Esophagus muscularis mucosa (tissue), 4 donors: ENCODE measurements at regions of chr1 and their contacts with region 1.

Region 1: DNA sequence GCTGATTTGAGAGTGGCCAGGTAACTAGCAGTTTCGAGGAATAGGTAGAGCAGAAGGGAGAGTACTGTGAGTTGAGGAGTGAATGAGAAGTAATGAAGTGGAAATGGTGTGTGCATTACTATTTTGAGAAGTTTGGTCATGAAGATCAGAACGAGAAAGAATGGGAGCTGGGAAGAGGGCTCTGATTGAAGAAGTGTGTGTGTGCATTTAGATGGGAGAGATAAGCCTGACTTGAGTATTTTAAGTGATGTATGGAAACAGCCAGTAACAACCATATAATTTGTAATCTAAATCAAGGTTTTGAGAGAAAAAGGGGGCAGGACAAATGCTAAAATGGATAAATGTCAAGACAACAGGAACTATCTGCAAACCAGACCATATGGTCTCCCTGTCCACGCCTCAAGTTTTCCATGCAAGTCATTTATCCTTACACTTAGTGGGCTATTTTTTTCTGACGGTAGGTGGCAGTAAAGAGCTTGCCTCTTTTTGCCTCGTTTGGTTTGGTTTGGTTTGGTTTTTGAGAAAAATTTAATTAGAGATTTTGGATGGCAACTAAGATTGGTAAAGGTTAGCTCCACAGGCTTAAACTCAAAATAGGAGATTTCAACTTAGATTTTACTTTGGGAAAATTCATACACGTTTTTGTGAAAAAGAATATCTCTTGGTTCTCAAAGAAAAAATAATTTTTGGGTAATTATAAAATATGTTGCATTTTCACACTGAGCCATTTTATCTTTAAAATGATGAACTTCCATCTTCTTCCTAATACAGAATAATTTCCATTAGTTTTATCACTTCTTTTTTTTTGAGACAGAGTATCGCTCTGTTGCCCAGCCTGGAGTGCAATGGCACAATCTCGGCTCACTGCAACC is 9.5 kb upstream of the B3GALNT2 start:
- DNase-seq: no peak
- H3K4me3 ChIP-seq: no peak overlapping the region
- H3K27ac ChIP-seq: no peak overlapping the region
- H3K4me1 ChIP-seq: no peaks in the 10 kb centered on the region
- H3K27me3 ChIP-seq: no peaks in the 10 kb centered on the region
- CTCF ChIP-seq: peak; percentile 74 to 97 (median 84)
- EP300 ChIP-seq: no peak
- POLR2A ChIP-seq: no peak

Region 2: GRCh38 chr1:235776396-235776795 is 262.7 kb after region 1 on chr1:
- intact Hi-C with region 1: loop called (anchors 10 kb)
- DNase-seq: no peak
- H3K4me3 ChIP-seq: no peak overlapping the region
- H3K27ac ChIP-seq: no peak overlapping the region
- H3K4me1 ChIP-seq: no peaks in the 10 kb centered on the region
- H3K27me3 ChIP-seq: no peaks in the 10 kb centered on the region
- CTCF ChIP-seq: no peak
- EP300 ChIP-seq: no peak
- POLR2A ChIP-seq: no peak